OCI-LY7 (cell line): ENCODE measurements at regions of chr12 and their contacts with region 1.

Region 1: GRCh38 chr12:27733052-27733656 is 22.5 kb downstream of the MRPS35 start:
- DNase-seq: peak; percentile 51
- H3K4me3 ChIP-seq: no peak overlapping the region
- H3K27ac ChIP-seq: no peak overlapping the region
- H3K4me1 ChIP-seq: no peaks in the 10 kb centered on the region
- CTCF ChIP-seq: peak; percentile 93

Region 2: DNA sequence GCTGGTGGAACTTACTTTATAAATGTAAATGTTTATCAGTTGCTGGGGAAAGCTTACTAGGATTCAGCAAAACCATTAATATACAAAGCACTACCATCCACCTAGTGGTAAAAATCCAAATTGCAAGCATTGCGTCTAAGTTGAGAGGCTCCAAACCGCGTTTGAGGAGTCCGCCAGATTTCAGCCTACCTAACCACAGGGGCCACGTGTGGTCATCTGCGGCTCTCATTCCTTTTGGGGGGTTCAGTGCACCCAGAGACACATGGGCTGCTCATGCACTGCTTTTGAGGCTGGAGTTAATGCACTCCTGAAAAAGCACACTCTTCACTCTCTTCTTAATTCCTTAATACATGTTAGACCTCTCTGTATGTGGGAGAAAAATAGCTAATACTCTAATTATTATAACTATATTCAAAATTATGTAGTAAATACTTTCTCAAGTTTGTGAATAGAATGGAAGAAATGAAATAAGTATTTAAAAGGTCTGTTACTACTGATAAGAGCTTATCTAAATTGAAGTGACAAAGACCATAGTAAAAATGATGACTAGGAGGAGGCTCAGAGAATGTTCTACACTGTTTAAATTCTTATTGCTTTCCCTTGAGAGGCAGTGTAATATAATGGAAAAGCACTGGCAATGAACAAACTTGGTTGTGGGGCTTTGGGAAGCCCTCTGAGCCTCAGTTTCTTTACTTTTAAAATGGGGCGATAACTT is 88.3 kb after region 1 on chr12:
- CTCF ChIA-PET with region 1: no interaction called
- POLR2A ChIA-PET with region 1: no interaction called
- intact Hi-C with region 1: loop called (anchors 1 kb)
- DNase-seq: peak; percentile 83
- H3K4me3 ChIP-seq: no peak overlapping the region
- H3K27ac ChIP-seq: no peak overlapping the region
- H3K4me1 ChIP-seq: peaks cover 30% of the 10 kb centered on the region
- CTCF ChIP-seq: peak; percentile 90

Region 3: GRCh38 chr12:27940756-27941402 is 207.7 kb after region 1 on chr12:
- CTCF ChIA-PET with region 1: no interaction called
- POLR2A ChIA-PET with region 1: interaction called, 3 read pairs
- intact Hi-C with region 1: loop called (anchors 2 kb)
- DNase-seq: peak; percentile 61
- H3K4me3 ChIP-seq: no peak overlapping the region
- H3K27ac ChIP-seq: no peak overlapping the region
- H3K4me1 ChIP-seq: no peaks in the 10 kb centered on the region
- CTCF ChIP-seq: peak; percentile 96